Astrocyte of the cerebellum (primary cell): ENCODE measurements at regions of chr11 and their contacts with region 1.

Region 1: DNA sequence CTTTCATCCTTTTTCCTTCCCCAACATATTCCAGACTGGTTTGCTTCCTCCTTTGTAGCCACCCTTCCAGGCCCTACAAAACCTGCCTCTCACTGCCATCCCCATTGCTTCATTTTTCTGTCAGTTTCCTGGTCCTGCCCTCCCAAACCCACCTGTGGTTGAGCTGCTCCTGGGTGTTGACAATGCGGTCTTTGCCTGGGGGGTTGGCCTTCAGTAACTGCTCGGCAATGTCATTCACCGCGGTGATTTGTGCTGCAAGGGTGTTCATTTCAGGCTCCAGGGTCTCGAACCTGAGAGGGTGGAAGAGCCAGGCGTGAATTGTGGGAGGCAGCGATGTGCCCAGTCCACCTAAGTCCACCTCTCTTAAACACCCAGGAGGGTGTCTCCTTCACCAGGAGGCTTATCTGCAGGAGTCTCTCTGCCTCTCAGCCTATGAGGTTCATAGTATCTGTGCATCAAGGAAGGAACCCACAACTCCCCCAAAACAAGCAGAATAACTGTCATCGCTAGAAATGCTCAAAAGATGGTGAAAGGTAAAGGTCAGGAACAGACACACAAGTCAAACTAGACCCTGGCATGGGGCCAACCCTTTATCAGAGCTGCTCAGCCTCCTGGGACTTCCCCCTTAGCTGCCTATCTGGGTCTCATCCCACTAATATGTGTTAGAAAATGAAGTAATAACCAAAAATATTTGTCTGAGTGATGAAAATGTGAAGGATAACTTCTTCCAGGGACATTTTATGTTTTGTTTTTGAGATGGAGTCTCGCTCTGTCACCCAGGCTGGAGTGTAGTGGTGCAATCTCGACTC is 23.9 kb upstream of the RBM4B start:
- DNase-seq: no peak
- H3K4me3 ChIP-seq: no peak overlapping the region
- CTCF ChIP-seq: no peak

Region 2: GRCh38 chr11:66768088-66768521 is 66.5 kb after region 1 on chr11:
- in situ Hi-C with region 1: loop called (anchors 5 kb)
- DNase-seq: no peak
- H3K4me3 ChIP-seq: no peak overlapping the region
- CTCF ChIP-seq: no peak

Region 3: GRCh38 chr11:66883016-66883968 is 181.7 kb after region 1 on chr11:
- in situ Hi-C with region 1: loop called (anchors 10 kb)
- DNase-seq: no peak
- H3K4me3 ChIP-seq: no peak overlapping the region
- CTCF ChIP-seq: peak; percentile 82